ENCODE measurements at regions of chr15 and their contacts with region 1.

Region 1: DNA sequence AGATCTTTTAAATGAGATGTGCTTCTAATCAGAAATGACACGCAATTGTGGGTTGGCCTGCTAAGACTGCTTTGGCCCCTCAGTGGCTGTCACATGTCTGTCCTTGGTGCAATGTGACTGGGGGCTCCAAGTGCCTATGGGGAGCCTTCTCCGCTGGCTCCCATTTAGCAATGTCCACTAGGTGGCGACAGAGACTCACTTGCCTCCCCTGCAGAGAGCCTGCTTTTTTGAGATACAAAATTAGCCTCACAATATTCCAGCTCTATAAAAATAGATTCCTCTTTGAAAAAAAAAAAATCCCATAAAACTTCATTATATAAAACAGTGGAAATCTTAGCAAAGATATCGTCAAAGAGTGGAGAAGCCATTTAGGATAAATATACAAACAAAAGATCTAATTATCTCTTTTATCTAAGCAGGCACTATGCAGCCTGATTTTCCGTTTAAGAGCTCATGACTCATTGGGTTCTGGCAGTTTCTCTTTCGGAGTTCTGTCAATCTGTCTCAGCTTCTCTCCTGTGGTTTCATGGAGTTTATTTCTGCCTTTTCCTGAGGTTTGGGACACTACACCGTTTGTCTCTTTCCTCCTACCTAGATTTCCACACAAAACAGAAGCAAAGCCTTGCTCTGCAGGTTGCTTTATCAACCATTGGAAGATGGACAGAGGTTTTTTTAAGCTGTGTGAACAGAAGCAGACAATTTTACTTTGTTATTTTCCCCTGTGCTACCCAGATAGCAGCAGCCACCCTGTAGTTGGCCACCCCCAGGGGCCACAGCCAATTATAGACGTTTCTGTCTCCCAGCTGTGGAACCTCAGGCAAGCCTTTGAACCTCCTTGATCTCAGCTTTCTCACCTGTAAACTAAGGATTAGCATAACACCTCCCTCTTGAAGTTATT is 68.4 kb upstream of the TNFAIP8L3 start:
- DNase-seq: peak; percentile 73
- H3K4me3 ChIP-seq: no peak overlapping the region
- H3K27ac ChIP-seq: no peak overlapping the region
- H3K4me1 ChIP-seq: no peaks in the 10 kb centered on the region
- H3K27me3 ChIP-seq: no peaks in the 10 kb centered on the region
- CTCF ChIP-seq: peak; percentile 95

Region 2: DNA sequence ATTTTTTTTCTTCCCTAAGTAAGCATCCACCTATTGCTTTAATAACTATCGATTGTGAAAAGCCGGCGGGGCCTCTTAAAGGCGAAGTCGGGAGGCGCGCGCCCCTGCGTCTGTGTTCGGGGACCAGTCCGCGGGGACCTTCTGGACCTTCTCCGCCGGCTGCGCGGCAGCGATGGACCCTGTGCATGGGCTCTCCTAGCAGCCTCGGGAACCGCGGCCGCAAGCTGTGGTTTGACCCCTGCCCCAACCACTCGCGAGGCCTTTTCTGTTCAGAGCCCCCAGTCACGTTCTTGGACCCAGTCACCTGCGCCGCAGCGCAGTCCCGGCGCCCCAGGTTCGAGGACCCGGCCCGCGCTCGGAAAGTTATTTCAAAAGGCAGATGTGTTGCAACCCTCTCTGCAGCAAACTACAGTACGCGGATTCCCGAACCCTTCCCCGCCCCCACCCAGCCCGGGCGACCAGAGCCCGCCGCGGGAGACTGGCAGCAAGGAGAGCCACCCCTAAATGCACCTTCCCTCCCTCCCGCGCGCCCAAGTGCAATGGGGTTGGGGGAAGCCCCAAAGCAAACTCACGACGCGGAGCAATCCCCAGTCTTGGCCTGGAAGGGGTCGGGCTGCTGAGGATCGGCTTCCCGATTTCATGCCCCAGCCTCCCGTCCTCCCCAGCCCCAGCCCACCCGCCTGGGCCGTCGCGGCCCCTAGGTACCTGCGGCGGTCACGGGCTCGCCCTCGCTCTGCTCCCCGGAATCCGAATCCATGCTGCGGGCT is 69.1 kb before region 1 on chr15:
- intact Hi-C with region 1: no loop called
- DNase-seq: peak; percentile 52
- H3K4me3 ChIP-seq: peak overlapping the region; percentile 45
- H3K27ac ChIP-seq: peak overlapping the region; percentile 44
- H3K4me1 ChIP-seq: no peaks in the 10 kb centered on the region
- H3K27me3 ChIP-seq: peaks cover 13% of the 10 kb centered on the region
- CTCF ChIP-seq: no peak

Region 3: DNA sequence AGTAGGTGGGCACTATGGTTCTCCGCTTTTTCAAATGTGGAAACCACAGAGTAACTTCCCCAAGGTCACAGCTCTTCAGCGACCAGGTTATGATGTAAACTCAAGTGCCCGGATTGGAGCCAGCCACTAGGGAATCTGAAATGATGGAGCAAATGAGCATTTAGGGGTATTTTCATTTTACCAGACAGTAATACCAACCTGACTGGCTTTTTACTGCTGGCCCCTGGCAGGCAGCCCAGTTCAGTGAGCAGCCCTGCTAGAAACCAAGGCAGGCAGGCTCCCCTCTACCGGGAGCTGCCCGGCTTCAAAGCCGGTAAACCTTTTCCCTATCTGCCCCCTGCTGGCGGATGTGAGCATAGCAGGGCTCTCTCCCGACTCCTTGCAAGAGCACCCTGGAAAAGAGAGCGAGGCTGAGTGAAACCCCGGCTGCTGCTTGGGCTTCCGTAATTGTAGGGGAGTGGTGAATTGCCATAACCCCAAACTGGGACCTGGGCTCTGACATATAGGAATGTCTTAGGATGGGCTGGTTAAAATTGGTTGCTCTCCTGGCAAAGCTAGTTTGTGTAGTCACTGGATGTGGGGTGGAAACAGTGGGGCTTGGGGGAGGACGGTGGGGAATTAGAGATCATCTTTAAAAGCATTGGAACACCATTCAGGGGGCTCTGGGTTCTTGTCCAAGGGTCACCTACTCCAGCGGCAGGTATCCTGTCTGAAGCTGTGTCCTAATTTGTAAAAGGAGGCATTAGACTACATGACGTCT is 29.6 kb after region 1 on chr15:
- intact Hi-C with region 1: loop called (anchors 1 kb)
- DNase-seq: peak; percentile 95
- H3K4me3 ChIP-seq: no peak overlapping the region
- H3K27ac ChIP-seq: no peak overlapping the region
- H3K4me1 ChIP-seq: no peaks in the 10 kb centered on the region
- H3K27me3 ChIP-seq: no peaks in the 10 kb centered on the region
- CTCF ChIP-seq: peak; percentile 96

Region 4: GRCh38 chr15:51281368-51281967 is 118.4 kb after region 1 on chr15:
- intact Hi-C with region 1: loop called (anchors 10 kb)
- DNase-seq: peak; percentile 79
- H3K4me3 ChIP-seq: no peak overlapping the region
- H3K27ac ChIP-seq: no peak overlapping the region
- H3K4me1 ChIP-seq: no peaks in the 10 kb centered on the region
- H3K27me3 ChIP-seq: no peaks in the 10 kb centered on the region
- CTCF ChIP-seq: peak; percentile 56

Region 5: GRCh38 chr15:51380999-51381795 is 218.1 kb after region 1 on chr15:
- intact Hi-C with region 1: loop called (anchors 5 kb)
- DNase-seq: peak; percentile 67
- H3K4me3 ChIP-seq: no peak overlapping the region
- H3K27ac ChIP-seq: no peak overlapping the region
- H3K4me1 ChIP-seq: no peaks in the 10 kb centered on the region
- H3K27me3 ChIP-seq: no peaks in the 10 kb centered on the region
- CTCF ChIP-seq: peak; percentile 87